ENCODE measurements at regions of chr1 and their contacts with region 1.

Region 1: DNA sequence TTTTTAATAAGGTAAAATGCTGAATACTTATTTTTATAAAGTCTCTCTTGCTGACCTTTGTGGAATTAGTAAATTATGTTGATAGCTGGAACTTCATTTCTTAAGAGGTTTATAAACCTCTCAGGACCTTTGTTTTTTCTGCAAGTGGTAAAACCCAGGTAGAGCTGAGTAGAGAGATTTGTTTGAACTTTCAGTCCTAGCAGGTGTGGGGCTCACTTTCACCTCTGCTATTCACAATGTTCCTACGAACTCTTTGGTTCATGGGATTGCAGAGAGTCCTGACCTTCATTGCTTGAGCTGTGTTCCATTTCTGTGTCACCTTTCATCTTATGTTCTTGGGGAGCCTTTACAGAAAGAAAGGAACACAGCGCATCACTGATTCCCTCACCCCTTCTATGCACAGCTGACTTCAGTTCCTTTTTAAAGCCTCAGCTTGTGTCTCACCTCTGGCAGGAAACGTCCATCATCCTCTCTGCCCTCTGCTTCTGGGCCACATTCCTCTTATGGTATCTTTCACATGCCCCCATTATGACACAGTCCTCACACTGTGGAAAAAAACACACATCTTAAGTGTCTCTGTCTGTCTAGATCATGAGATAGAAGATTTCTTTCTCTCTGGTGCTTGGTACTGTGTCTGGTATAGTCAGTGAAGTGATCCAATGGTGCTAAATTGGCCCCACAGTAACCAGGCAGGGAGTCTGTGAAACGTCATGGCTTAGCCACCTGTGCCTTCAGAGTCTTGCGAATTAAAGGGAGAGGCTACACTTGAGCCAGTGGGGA is 262.5 kb upstream of the B3GALT2 start:
- DNase-seq: peak in 4 of 9 experiments; percentile 25 to 45 (median 39)
- ATAC-seq: peak; percentile 81
- H3K4me3 ChIP-seq: no peak overlapping the region
- H3K4me3 Mint-ChIP-seq: peak overlapping the region; percentile 15
- H3K27ac ChIP-seq: peak overlapping the region in 1 of 2 experiments; percentile 26
- H3K27ac Mint-ChIP-seq: peak overlapping the region; percentile 79
- H3K4me1 ChIP-seq: peaks cover 15% of the 10 kb centered on the region
- H3K4me1 Mint-ChIP-seq: peaks cover 14% of the 10 kb centered on the region
- H3K27me3 ChIP-seq: no peaks in the 10 kb centered on the region
- H3K27me3 Mint-ChIP-seq: no peaks in the 10 kb centered on the region
- CTCF ChIP-seq: no peak

Region 2: DNA sequence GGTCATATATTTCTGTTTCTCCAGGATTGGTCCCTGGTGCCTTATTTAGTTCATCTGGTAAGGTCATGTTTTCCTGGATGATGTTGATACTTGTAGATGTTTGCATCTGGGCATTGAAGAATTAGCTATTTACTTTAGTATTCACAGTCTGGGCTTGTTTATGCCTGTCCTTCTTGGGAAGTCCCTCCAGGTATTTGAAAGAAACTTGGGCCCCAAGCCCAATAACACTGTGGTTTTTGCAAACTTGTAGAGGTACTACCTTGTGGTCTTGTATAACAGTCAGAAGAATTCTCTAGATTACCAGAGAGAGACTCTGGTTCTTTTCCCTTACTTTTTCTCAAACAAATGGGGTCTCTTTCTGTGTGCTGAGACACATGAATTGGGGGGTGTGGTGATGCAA is 11.1 kb before region 1 on chr1:
- CTCF ChIA-PET with region 1: interaction called, 3 read pairs
- POLR2A ChIA-PET with region 1: interaction called, 4 read pairs
- intact Hi-C with region 1: loop called in 1 of 2 experiments (anchors 1 kb)
- DNase-seq: peak in 2 of 9 experiments; percentile 49 to 52
- ATAC-seq: no peak
- H3K4me3 ChIP-seq: no peak overlapping the region
- H3K4me3 Mint-ChIP-seq: no peak overlapping the region
- H3K27ac ChIP-seq: no peak overlapping the region
- H3K27ac Mint-ChIP-seq: peak overlapping the region; percentile 78
- H3K4me1 ChIP-seq: peaks cover 9% of the 10 kb centered on the region
- H3K4me1 Mint-ChIP-seq: peaks cover 16% of the 10 kb centered on the region
- H3K27me3 ChIP-seq: no peaks in the 10 kb centered on the region
- H3K27me3 Mint-ChIP-seq: no peaks in the 10 kb centered on the region
- CTCF ChIP-seq: no peak

Region 3: GRCh38 chr1:193504920-193505319 is 56.0 kb after region 1 on chr1:
- CTCF ChIA-PET with region 1: no interaction called
- POLR2A ChIA-PET with region 1: no interaction called
- intact Hi-C with region 1: loop called in 1 of 2 experiments (anchors 5 kb)
- DNase-seq: no peak
- ATAC-seq: no peak
- H3K4me3 ChIP-seq: no peak overlapping the region
- H3K4me3 Mint-ChIP-seq: no peak overlapping the region
- H3K27ac ChIP-seq: no peak overlapping the region
- H3K27ac Mint-ChIP-seq: no peak overlapping the region
- H3K4me1 ChIP-seq: no peaks in the 10 kb centered on the region
- H3K4me1 Mint-ChIP-seq: peaks cover 7% of the 10 kb centered on the region
- H3K27me3 ChIP-seq: no peaks in the 10 kb centered on the region
- H3K27me3 Mint-ChIP-seq: no peaks in the 10 kb centered on the region
- CTCF ChIP-seq: no peak

Measured in CD8-positive, alpha-beta T cell (primary cell).